ENCODE measurements at regions of chr2 and their contacts with region 1.

Region 1: GRCh38 chr2:216195565-216196029 is 86.4 kb downstream of the XRCC5 start:
- DNase-seq: peak; percentile 55
- H3K4me3 Mint-ChIP-seq: peak overlapping the region; percentile 31
- H3K27ac Mint-ChIP-seq: peak overlapping the region; percentile 91
- H3K4me1 Mint-ChIP-seq: peaks cover 66% of the 10 kb centered on the region
- H3K27me3 Mint-ChIP-seq: no peaks in the 10 kb centered on the region

Region 2: GRCh38 chr2:216151313-216152030 is 44.1 kb before region 1 on chr2:
- CTCF ChIA-PET with region 1: no interaction called
- POLR2A ChIA-PET with region 1: no interaction called
- intact Hi-C with region 1: loop called (anchors 2 kb)
- DNase-seq: no peak
- H3K4me3 Mint-ChIP-seq: no peak overlapping the region
- H3K27ac Mint-ChIP-seq: peak overlapping the region; percentile 14
- H3K4me1 Mint-ChIP-seq: peaks cover 35% of the 10 kb centered on the region
- H3K27me3 Mint-ChIP-seq: no peaks in the 10 kb centered on the region

Region 3: GRCh38 chr2:216181351-216181750 is 14.2 kb before region 1 on chr2:
- CTCF ChIA-PET with region 1: no interaction called
- POLR2A ChIA-PET with region 1: no interaction called
- intact Hi-C with region 1: loop called (anchors 1 kb)
- DNase-seq: no peak
- H3K4me3 Mint-ChIP-seq: no peak overlapping the region
- H3K27ac Mint-ChIP-seq: no peak overlapping the region
- H3K4me1 Mint-ChIP-seq: peaks cover 69% of the 10 kb centered on the region
- H3K27me3 Mint-ChIP-seq: no peaks in the 10 kb centered on the region

Region 4: DNA sequence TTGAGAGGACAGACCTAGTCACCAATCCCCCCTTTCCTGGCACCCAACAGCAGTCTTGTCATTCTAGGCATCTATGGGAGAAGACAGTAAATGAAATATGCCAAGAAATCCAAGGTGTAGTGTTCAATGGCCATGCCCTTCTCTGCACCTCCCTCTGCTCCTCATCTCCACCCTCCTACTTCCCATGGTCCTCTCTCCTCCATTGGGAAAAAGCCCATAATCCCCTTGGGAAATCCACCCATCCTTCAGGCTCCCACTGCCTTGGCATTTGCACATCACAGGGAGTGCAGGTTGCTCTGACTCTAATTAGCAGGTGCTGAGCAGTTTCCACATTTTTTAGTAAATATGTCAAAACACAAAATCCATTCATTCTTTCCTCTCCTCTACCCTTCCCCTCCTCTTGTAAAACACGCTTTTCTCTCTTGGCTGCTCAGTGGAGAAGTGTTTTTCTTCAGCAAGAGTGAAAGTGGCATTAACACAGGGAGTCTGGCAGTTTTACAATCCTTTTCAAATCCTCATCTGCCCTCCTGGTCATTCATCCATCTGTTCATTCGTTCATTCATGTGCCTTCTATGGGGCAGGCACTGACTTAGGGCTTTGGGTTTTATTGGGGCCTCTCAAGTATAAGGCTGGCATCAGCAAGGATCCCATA is 143.7 kb after region 1 on chr2:
- CTCF ChIA-PET with region 1: no interaction called
- POLR2A ChIA-PET with region 1: no interaction called
- intact Hi-C with region 1: no loop called
- DNase-seq: no peak
- H3K4me3 Mint-ChIP-seq: no peak overlapping the region
- H3K27ac Mint-ChIP-seq: no peak overlapping the region
- H3K4me1 Mint-ChIP-seq: peaks cover 12% of the 10 kb centered on the region
- H3K27me3 Mint-ChIP-seq: no peaks in the 10 kb centered on the region